ENCODE measurements at regions of chr17 and their contacts with region 1.

Region 1: GRCh38 chr17:73984941-73985340 is 218.5 kb upstream of the RPL38 start:
- DNase-seq: no peak
- H3K4me3 ChIP-seq: no peak overlapping the region
- H3K27ac ChIP-seq: no peak overlapping the region
- H3K4me1 ChIP-seq: no peaks in the 10 kb centered on the region
- H3K27me3 ChIP-seq: no peaks in the 10 kb centered on the region
- CTCF ChIP-seq: no peak
- POLR2A ChIP-seq: no peak

Region 2: GRCh38 chr17:73910206-73910605 is 74.7 kb before region 1 on chr17:
- intact Hi-C with region 1: loop called in 1 of 2 experiments (anchors 10 kb)
- DNase-seq: no peak
- H3K4me3 ChIP-seq: no peak overlapping the region
- H3K27ac ChIP-seq: no peak overlapping the region
- H3K4me1 ChIP-seq: no peaks in the 10 kb centered on the region
- H3K27me3 ChIP-seq: no peaks in the 10 kb centered on the region
- CTCF ChIP-seq: no peak
- POLR2A ChIP-seq: no peak

Region 3: GRCh38 chr17:74059479-74060240 is 74.7 kb after region 1 on chr17:
- intact Hi-C with region 1: no loop called
- DNase-seq: peak in 1 of 7 donors; percentile 73
- H3K4me3 ChIP-seq: no peak overlapping the region
- H3K27ac ChIP-seq: no peak overlapping the region
- H3K4me1 ChIP-seq: no peaks in the 10 kb centered on the region
- H3K27me3 ChIP-seq: no peaks in the 10 kb centered on the region
- CTCF ChIP-seq: no peak
- POLR2A ChIP-seq: no peak

Measured in adrenal gland (tissue), 19 donors.